AG04449 (cell line): ENCODE measurements at regions of chr4 and their contacts with region 1.

Region 1: DNA sequence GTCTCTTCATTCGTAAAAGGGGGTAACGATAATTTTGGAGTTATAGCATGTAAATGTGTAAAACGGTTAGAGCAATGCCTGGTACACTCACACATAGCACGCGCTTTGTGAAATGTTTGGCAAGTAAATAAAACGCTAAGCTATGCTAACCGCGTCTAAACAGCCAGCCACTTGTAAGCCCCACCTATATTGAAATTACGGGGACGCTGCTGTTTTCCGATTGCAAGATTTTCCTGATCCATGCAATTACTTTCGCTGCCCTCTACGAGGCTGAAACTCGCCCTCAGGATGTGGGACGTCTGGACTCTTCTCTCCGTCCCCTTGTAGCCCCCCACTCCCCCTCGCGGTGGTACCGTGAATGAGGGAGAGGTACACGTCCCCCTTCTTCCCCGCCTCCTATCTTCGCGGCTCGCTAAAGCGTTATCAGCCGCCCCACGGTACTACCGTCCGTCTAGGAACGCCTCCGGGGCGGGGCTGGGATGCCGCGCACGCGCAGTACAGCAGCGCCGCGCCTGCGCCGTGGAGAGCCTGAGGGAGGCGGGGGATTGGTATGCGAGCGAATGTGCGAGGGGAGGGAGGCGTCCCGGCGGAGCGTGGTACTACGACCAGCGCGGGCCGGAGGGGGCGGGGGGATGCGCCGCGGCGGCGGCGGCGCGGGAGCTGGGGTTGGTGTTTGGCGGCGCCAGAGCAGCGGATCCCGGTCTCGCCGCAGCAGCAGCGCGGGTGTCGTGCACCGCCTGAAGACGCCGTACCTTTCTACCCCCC is at the start of gene STIM2:
- DNase-seq: peak; percentile 62
- H3K4me3 ChIP-seq: peak within 1 kb of the TSS; percentile 76
- CTCF ChIP-seq: peak; percentile 49

Region 2: GRCh38 chr4:26936284-26937065 is 76.1 kb after region 1 on chr4:
- CTCF ChIA-PET with region 1: no interaction called
- POLR2A ChIA-PET with region 1: no interaction called
- DNase-seq: no peak
- H3K4me3 ChIP-seq: no peak overlapping the region
- CTCF ChIP-seq: no peak

Region 3: GRCh38 chr4:27000820-27001219 is 140.5 kb after region 1 on chr4:
- CTCF ChIA-PET with region 1: interaction called, 17 read pairs
- POLR2A ChIA-PET with region 1: interaction called, 4 read pairs
- DNase-seq: no peak
- H3K4me3 ChIP-seq: no peak overlapping the region
- CTCF ChIP-seq: no peak